PC-9 (cell line): ENCODE measurements at regions of chr2 and their contacts with region 1.

Region 1: GRCh38 chr2:84925724-84926376 is 20.4 kb downstream of the TMSB10 start:
- DNase-seq: peak; percentile 92 to 99
- H3K4me3 ChIP-seq: peak overlapping the region; percentile 52
- H3K27ac ChIP-seq: no peak overlapping the region
- H3K4me1 ChIP-seq: peaks cover 9% of the 10 kb centered on the region; the same call in 1 of the 2 replicates
- H3K27me3 ChIP-seq: no peaks in the 10 kb centered on the region
- CTCF ChIP-seq: peak; percentile 97

Region 2: DNA sequence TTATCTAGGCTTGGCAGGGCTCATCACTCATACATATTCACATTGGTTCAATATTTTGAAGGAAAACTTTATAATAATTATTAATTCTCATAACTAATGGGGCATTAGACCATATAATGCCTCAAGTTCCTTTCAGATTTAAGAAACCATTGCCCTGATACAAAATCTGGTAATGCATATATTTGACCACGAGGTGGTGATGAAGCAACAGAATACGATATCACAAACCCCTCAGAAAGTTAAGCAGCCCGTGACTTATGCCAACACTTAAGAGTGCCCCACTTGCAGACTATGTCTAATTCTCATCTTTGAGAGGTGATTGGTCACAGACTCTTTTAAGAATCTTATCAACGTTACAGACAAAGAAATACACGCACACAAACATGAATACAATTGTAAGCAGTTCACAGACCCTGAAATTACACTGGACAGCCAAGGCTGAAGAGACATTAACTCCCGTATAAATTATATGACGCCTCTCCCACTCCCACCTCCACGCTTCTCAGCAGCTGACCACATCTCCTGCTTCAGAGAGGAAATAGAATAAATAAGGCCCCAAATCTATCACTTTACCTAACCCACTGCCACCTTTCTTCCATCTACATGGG is 430.2 kb before region 1 on chr2:
- CTCF ChIA-PET with region 1: no interaction called
- POLR2A ChIA-PET with region 1: no interaction called
- intact Hi-C with region 1: loop called (anchors 1 kb)
- DNase-seq: no peak
- H3K4me3 ChIP-seq: no peak overlapping the region
- H3K27ac ChIP-seq: no peak overlapping the region
- H3K4me1 ChIP-seq: no peaks in the 10 kb centered on the region
- H3K27me3 ChIP-seq: no peaks in the 10 kb centered on the region
- CTCF ChIP-seq: peak; percentile 76

Region 3: GRCh38 chr2:84649487-84650142 is 276.2 kb before region 1 on chr2:
- CTCF ChIA-PET with region 1: no interaction called
- POLR2A ChIA-PET with region 1: no interaction called
- intact Hi-C with region 1: loop called (anchors 10 kb)
- DNase-seq: no peak
- H3K4me3 ChIP-seq: no peak overlapping the region
- H3K27ac ChIP-seq: no peak overlapping the region
- H3K4me1 ChIP-seq: no peaks in the 10 kb centered on the region
- H3K27me3 ChIP-seq: peaks cover 14% of the 10 kb centered on the region; the same call in 1 of the 2 replicates
- CTCF ChIP-seq: no peak

Region 4: DNA sequence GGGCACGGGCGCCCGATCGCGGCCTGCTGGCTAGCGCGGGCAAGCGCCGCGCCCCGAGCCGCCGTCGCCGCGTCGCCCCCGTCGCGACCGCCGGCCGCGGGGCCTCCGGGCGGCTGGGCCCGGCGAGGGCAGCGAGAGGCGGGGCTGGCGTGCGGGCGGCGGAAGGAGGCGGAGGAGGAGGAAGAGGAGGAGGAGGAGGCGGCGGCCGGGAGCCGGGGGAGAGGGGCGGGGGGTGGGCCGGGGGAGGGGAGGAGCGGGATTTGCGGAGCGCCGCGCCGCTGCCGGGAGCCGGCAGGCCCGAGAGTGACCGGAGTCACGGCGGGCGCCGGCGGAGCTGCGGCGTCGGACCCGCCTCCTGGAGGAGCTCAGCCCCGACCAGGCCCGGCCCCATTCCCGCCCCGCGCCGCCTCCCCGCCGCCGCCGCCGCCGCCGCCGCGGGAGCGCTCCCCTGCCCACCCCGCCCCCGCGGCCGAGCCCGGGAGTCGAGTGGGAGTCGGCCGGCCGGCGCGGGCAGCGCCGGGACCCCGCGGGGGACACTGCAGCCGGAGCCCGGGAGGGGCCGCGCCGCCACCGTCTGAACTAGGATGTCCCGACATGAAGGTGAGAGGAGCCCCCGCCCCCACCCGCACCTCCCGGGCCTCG is 45.1 kb after region 1 on chr2 and contains the start of gene KCMF1:
- CTCF ChIA-PET with region 1: interaction called, 3 read pairs
- POLR2A ChIA-PET with region 1: no interaction called
- intact Hi-C with region 1: loop called (anchors 2 kb)
- DNase-seq: peak in 1 of 2 experiments; percentile 81
- H3K4me3 ChIP-seq: peak within 1 kb of the TSS; percentile 89
- H3K27ac ChIP-seq: peak within 1 kb of the TSS; percentile 84
- H3K4me1 ChIP-seq: peaks cover 34% of the 10 kb centered on the region
- H3K27me3 ChIP-seq: no peaks in the 10 kb centered on the region
- CTCF ChIP-seq: no peak
- total RNA-seq, gene KCMF1: 95.3 and 97.8 TPM in 2 replicates

Region 5: GRCh38 chr2:85066874-85067351 is 141.1 kb after region 1 on chr2:
- CTCF ChIA-PET with region 1: no interaction called
- POLR2A ChIA-PET with region 1: no interaction called
- intact Hi-C with region 1: loop called (anchors 5 kb)
- DNase-seq: peak; percentile 50 to 68
- H3K4me3 ChIP-seq: no peak overlapping the region
- H3K27ac ChIP-seq: no peak overlapping the region
- H3K4me1 ChIP-seq: no peaks in the 10 kb centered on the region
- H3K27me3 ChIP-seq: peaks cover 3% of the 10 kb centered on the region; the same call in 1 of the 2 replicates
- CTCF ChIP-seq: peak; percentile 93

Region 6: GRCh38 chr2:85302121-85302520 is 376.3 kb after region 1 on chr2:
- CTCF ChIA-PET with region 1: interaction called, 15 read pairs
- POLR2A ChIA-PET with region 1: no interaction called
- intact Hi-C with region 1: loop called (anchors 1 kb)
- DNase-seq: no peak
- H3K4me3 ChIP-seq: no peak overlapping the region
- H3K27ac ChIP-seq: no peak overlapping the region
- H3K4me1 ChIP-seq: no peaks in the 10 kb centered on the region
- H3K27me3 ChIP-seq: no peaks in the 10 kb centered on the region
- CTCF ChIP-seq: no peak

Region 7: DNA sequence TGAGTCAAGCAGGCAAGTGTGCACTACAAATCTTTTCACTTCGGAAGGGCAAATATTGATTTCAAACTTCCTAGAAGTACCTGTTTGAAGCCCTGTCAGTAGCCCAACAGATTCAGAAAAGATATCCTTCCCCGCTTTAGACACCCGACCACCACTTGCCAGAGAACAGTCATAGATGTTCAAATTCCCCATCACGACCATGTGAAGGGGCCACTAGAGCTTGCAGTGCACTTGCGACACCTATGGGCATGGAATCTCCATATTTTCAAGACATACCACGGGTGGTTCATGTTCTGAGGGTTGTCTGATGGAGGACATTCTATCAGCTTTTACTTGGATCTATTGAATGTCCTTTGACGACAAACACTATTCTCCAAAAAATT is 792.1 kb after region 1 on chr2:
- CTCF ChIA-PET with region 1: no interaction called
- POLR2A ChIA-PET with region 1: no interaction called
- intact Hi-C with region 1: no loop called
- DNase-seq: no peak
- H3K4me3 ChIP-seq: no peak overlapping the region
- H3K27ac ChIP-seq: no peak overlapping the region
- H3K4me1 ChIP-seq: no peaks in the 10 kb centered on the region
- H3K27me3 ChIP-seq: no peaks in the 10 kb centered on the region
- CTCF ChIP-seq: 0 out of 2 replicates have a peak, but pooled peaks have one; percentile 15